Activated CD4-positive, alpha-beta T cell treated with anti-CD3 and anti-CD28 coated beads, Interleukin-2, amount 10 ng/mL, durations not matched to agents 24 days and 14 days (primary cell): ENCODE measurements at regions of chr12 and their contacts with region 1.

Region 1: DNA sequence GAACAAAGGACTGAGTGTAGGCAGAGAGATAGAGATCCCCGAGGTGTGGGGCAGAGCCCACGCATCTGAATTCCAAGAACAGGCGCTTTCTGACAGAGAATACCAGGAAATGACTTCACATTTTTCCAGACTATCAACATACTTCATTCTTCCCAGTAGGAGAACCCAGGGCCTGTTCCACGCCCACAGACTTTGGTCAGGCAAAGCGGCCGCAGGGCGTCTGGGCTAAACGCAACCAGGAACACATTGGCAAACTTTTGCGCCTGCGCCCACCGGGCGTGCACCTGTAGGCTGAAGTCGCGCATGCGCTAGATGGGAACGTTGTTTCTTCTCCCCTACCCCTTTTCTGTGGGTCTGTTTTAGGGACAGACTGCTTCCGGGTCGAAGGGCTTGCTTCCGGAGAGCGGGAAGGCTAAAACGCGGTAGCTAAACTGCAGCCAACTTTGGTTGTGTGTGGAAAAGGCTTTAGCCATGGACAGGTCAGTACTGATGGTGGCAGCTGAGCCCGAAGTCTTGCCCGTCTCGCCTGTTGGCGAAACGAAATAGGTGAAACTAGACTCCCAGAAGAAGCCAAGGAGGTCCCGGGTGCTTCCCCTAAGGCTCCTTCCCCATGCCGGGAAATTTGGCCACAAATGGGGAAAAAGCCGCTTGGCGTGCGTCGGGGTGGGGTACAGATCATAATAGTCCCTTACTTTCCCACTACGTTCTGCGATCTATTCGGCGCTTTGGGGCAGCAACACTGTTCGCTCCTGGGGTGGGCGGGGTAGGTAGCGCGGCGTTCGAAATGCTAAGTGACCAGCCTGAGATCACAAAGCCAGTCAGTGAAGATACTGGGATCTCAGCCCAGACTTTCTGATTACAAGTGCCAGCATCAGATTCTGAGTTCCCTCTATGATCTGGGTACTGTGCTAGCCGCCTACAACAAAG is at the start of gene NUP107:
- DNase-seq: peak; percentile 99
- H3K4me3 Mint-ChIP-seq: peak within 1 kb of the TSS; percentile 95
- H3K27ac Mint-ChIP-seq: peak within 1 kb of the TSS; percentile 92
- H3K4me1 Mint-ChIP-seq: peaks cover 33% of the 10 kb centered on the region
- H3K27me3 Mint-ChIP-seq: no peaks in the 10 kb centered on the region
- total RNA-seq, gene NUP107: 127 and 128 TPM in 2 replicates

Region 2: GRCh38 chr12:68354977-68355541 is 331.8 kb before region 1 on chr12:
- intact Hi-C with region 1: no loop called
- DNase-seq: no peak
- H3K4me3 Mint-ChIP-seq: no peak overlapping the region
- H3K27ac Mint-ChIP-seq: no peak overlapping the region
- H3K4me1 Mint-ChIP-seq: peaks cover 14% of the 10 kb centered on the region
- H3K27me3 Mint-ChIP-seq: peaks cover 5% of the 10 kb centered on the region

Region 3: GRCh38 chr12:68364893-68365725 is 321.7 kb before region 1 on chr12:
- intact Hi-C with region 1: loop called (anchors 2 kb)
- DNase-seq: peak; percentile 95
- H3K4me3 Mint-ChIP-seq: peak overlapping the region; percentile 83
- H3K27ac Mint-ChIP-seq: peak overlapping the region; percentile 95
- H3K4me1 Mint-ChIP-seq: peaks cover 56% of the 10 kb centered on the region
- H3K27me3 Mint-ChIP-seq: no peaks in the 10 kb centered on the region

Region 4: GRCh38 chr12:68675101-68675842 is 11.6 kb before region 1 on chr12:
- intact Hi-C with region 1: loop called (anchors 1 kb)
- DNase-seq: peak; percentile 91
- H3K4me3 Mint-ChIP-seq: peak overlapping the region; percentile 76
- H3K27ac Mint-ChIP-seq: peak overlapping the region; percentile 91
- H3K4me1 Mint-ChIP-seq: peaks cover 43% of the 10 kb centered on the region
- H3K27me3 Mint-ChIP-seq: no peaks in the 10 kb centered on the region

Region 5: DNA sequence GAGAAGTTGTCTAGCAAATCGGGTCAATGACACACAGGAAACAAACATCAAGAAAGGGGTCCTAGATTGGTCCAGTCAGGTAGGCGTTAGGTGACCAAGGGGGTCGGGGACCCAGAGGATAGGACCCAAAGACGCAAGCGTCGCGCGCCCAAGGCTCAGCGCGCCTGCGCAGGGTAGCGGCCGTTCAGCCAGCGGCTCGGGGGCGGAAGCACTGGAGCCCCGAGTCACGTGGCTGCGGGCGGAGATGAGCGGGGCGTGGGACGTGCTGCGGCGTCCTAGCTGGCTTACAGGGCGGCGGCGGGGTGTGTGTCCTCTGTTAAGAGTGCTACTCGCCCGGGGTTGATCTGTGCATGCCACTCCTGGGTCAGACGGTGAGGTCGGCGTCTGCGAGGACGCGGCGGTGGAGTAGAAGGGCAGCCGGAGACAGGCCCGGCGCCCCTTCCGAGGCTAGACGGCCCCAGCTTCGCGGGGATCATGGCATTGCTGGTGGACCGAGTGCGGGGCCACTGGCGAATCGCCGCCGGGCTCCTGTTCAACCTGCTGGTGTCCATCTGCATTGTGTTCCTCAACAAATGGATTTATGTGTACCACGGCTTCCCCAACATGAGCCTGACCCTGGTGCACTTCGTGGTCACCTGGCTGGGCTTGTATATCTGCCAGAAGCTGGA is 59.2 kb after region 1 on chr12 and contains the start of gene SLC35E3:
- intact Hi-C with region 1: loop called (anchors 1 kb)
- DNase-seq: peak; percentile 98
- H3K4me3 Mint-ChIP-seq: peak within 1 kb of the TSS; percentile 93
- H3K27ac Mint-ChIP-seq: peak within 1 kb of the TSS; percentile 80
- H3K4me1 Mint-ChIP-seq: peaks cover 38% of the 10 kb centered on the region
- H3K27me3 Mint-ChIP-seq: no peaks in the 10 kb centered on the region
- total RNA-seq, gene SLC35E3: 3.8 and 4.2 TPM in 2 replicates